Prostate gland (tissue), 2 donors: ENCODE measurements at regions of chr5 and their contacts with region 1.

Region 1: GRCh38 chr5:66814146-66814991 is 218.2 kb downstream of the MAST4 start:
- DNase-seq: peak; percentile 51
- H3K4me3 ChIP-seq: no peak overlapping the region
- H3K27ac ChIP-seq: no peak overlapping the region
- H3K4me1 ChIP-seq: no peaks in the 10 kb centered on the region
- H3K27me3 ChIP-seq: no peaks in the 10 kb centered on the region
- CTCF ChIP-seq: peak; percentile 36 to 76 (median 71)
- POLR2A ChIP-seq: no peak

Region 2: GRCh38 chr5:66987949-66988838 is 173.8 kb after region 1 on chr5:
- intact Hi-C with region 1: loop called (anchors 10 kb)
- DNase-seq: no peak
- H3K4me3 ChIP-seq: no peak overlapping the region
- H3K27ac ChIP-seq: no peak overlapping the region
- H3K4me1 ChIP-seq: no peaks in the 10 kb centered on the region
- H3K27me3 ChIP-seq: no peaks in the 10 kb centered on the region
- CTCF ChIP-seq: peak; percentile 60 to 80 (median 71)
- POLR2A ChIP-seq: no peak